A549 (cell line): ENCODE measurements at regions of chr11 and their contacts with region 1.

Region 1: GRCh38 chr11:1772270-1773130 is 8.8 kb upstream of the CTSD start:
- DNase-seq: peak; percentile 94 to 95
- ATAC-seq: peak; percentile 95 to 98
- H3K4me3 ChIP-seq: no peak overlapping the region
- H3K27ac ChIP-seq: peak overlapping the region; percentile 97 to 99
- H3K4me1 ChIP-seq: peaks cover 42% of the 10 kb centered on the region
- CTCF ChIP-seq: no peak
- EP300 ChIP-seq: peak in 1 of 2 experiments; percentile 54; a peak in 1 of 5 replicates
- POLR2A ChIP-seq: no peak
- RAD21 ChIP-seq: no peak

Region 2: GRCh38 chr11:1644601-1645356 is 127.7 kb before region 1 on chr11:
- CTCF ChIA-PET with region 1: no interaction called
- POLR2A ChIA-PET with region 1: no interaction called
- DNase-seq: no peak
- ATAC-seq: 0 out of 6 replicates have a peak, but pooled peaks of 1 of the 2 experiments have one; percentile 14
- H3K4me3 ChIP-seq: no peak overlapping the region
- H3K27ac ChIP-seq: no peak overlapping the region
- H3K4me1 ChIP-seq: no peaks in the 10 kb centered on the region
- CTCF ChIP-seq: no peak
- EP300 ChIP-seq: no peak
- POLR2A ChIP-seq: no peak
- RAD21 ChIP-seq: no peak

Region 3: DNA sequence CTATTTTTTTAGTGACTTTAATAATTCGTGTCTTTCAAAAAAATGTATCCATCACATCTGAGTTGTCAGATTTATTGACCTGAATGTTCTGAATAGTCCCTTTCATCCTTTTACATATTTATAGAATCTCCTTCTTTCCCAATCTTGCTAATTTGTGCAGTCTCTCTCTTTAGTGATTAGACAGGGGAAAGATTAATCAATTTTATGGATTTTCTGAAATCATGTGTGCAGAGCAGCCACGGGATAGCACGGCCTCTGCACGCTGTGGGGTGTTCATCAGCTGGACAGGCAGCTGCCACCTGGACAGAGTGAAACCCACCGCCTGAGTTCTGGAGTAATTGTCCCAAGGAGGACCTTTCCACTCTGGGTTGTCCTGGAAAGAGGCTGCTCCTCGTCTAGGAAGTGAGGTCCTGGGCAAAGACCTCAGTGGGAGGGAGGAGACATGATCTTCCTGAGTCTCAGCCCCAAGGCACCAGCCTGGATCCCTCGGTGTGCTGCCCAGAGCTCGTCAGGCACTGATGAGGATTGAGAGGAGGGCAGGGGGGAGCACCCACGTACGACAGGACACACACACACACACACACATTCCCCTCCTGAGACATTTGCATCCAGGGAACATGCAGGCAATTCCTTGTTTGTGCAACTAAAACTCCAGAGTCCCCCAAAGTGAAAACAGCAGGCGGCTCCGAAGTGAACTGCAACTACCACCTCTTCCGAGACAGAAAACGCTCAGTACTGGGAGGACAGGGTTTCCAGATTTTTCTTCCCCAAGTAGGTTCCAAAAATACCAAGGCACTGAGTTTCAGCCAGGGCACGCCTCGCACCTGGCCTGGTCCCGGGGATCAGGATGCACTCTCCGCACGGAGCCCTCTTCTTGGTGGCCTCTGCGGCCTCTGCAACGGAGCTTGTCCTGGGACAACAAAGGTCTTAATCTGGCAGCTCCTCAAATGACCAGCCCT is 98.0 kb before region 1 on chr11:
- CTCF ChIA-PET with region 1: no interaction called
- POLR2A ChIA-PET with region 1: no interaction called
- DNase-seq: no peak
- ATAC-seq: no peak; a peak in 1 of 6 replicates
- H3K4me3 ChIP-seq: no peak overlapping the region
- H3K27ac ChIP-seq: no peak overlapping the region
- H3K4me1 ChIP-seq: no peaks in the 10 kb centered on the region
- CTCF ChIP-seq: no peak
- EP300 ChIP-seq: no peak
- POLR2A ChIP-seq: no peak
- RAD21 ChIP-seq: no peak

Region 4: GRCh38 chr11:1749414-1750312 is 22.8 kb before region 1 on chr11:
- CTCF ChIA-PET with region 1: interaction called, 4 read pairs
- POLR2A ChIA-PET with region 1: interaction called, 11 read pairs
- DNase-seq: peak in 1 of 2 experiments; percentile 42
- ATAC-seq: peak; percentile 46 to 51
- H3K4me3 ChIP-seq: peak overlapping the region; percentile 34; the same call in 2 of the 3 replicates
- H3K27ac ChIP-seq: peak overlapping the region in 1 of 2 experiments; percentile 80; a peak in 3 of 6 replicates
- H3K4me1 ChIP-seq: peaks cover 24% of the 10 kb centered on the region; the same call in 2 of the 3 replicates
- CTCF ChIP-seq: no peak
- EP300 ChIP-seq: no peak
- POLR2A ChIP-seq: no peak
- RAD21 ChIP-seq: no peak